Ovary (tissue), 10 donors: ENCODE measurements at regions of chr3 and their contacts with region 1.

Region 1: DNA sequence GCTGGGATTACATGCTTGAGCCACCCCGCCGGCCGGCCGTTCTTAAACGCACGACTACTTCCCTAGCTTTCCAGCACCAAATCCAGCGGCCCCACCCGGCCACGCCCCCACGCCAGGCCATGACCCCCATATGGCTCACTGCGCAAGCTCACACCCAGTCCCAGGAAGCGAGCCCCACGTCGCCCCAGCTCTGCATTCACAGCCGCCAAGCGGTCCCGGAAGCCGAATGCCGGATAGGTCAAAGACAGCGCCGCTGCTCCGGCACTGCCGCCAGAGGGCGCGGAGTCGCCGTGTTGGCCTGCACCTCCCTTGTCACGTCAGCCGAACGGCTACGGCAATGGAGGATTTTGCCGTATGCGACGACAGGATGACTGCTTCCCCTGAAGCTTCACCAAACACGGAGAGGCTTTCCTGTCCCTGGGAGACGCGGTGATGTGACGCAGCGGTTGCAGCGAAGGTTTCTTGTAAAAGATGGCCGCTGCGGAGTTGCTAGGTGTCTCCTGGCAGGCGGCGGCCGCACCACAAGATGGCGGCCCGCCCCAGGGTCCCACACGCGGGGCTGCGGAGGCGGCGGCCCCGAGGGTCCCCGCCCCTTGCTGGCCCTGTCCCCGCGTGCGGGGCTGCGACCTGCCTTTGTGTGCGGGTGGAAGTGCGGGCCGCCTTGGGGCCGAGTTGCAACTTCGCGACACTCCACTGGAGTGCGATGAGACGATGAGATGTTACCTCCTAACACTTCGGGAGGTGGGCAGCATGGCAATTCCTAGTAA is 30.2 kb upstream of the RPN1 start:
- DNase-seq: peak; percentile 99 to 100 (median 99)
- H3K4me3 ChIP-seq: peak overlapping the region; percentile 76
- H3K27ac ChIP-seq: peak overlapping the region; percentile 87 to 93
- H3K4me1 ChIP-seq: peaks cover 3% of the 10 kb centered on the region
- H3K27me3 ChIP-seq: no peaks in the 10 kb centered on the region
- CTCF ChIP-seq: peak; percentile 93 to 100 (median 100)
- EP300 ChIP-seq: peak; percentile 7
- POLR2A ChIP-seq: peak; percentile 92

Region 2: DNA sequence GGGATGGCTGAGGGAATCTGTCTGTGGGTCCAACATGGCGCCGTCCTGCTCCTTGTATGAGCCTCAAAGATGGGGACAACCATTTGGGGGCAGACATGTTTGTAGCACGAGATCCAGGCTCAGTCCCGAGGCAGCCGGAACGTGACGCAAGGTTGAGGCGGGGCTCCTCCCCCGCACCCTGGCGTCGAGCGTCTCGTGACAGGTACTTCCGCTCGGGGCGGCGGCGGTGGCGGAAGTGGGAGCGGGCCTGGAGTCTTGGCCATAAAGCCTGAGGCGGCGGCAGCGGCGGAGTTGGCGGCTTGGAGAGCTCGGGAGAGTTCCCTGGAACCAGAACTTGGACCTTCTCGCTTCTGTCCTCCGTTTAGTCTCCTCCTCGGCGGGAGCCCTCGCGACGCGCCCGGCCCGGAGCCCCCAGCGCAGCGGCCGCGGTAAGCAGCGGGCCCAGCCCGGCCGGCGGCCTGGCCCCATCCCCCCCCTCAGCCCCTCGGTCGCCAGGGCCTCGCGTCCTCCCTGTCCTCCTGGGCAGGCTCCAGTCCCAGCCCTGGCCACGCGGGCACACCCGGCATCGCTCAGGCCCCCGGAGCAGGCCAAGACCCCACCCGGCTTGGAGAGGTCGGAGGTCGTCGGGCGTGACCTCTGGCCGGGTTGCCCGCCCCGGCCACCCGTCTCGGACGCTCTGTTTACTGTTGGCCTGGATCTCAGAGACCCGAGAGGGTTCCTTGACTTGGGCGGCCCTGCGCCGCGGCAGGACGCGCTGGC is 45.3 kb after region 1 on chr3 and contains the start of gene RAB7A:
- intact Hi-C with region 1: loop called in 1 of 4 experiments (anchors 5 kb)
- DNase-seq: peak; percentile 97 to 99 (median 98)
- H3K4me3 ChIP-seq: peak within 1 kb of the TSS; percentile 85
- H3K27ac ChIP-seq: peak within 1 kb of the TSS; percentile 78 to 94
- H3K4me1 ChIP-seq: peaks cover 9% of the 10 kb centered on the region
- H3K27me3 ChIP-seq: no peaks in the 10 kb centered on the region
- CTCF ChIP-seq: peak in 1 of 3 donors; percentile 12
- EP300 ChIP-seq: peak; percentile 94
- POLR2A ChIP-seq: peak; percentile 91
- total RNA-seq, gene RAB7A: 70.1 to 253 (median 213) TPM

Region 3: GRCh38 chr3:128787256-128788240 is 106.8 kb after region 1 on chr3:
- intact Hi-C with region 1: loop called in 3 of 4 experiments (anchors 5 to 10 kb)
- DNase-seq: no peak
- H3K4me3 ChIP-seq: no peak overlapping the region
- H3K27ac ChIP-seq: no peak overlapping the region
- H3K4me1 ChIP-seq: peaks cover 21% of the 10 kb centered on the region
- H3K27me3 ChIP-seq: no peaks in the 10 kb centered on the region
- CTCF ChIP-seq: no peak
- EP300 ChIP-seq: no peak
- POLR2A ChIP-seq: no peak

Region 4: DNA sequence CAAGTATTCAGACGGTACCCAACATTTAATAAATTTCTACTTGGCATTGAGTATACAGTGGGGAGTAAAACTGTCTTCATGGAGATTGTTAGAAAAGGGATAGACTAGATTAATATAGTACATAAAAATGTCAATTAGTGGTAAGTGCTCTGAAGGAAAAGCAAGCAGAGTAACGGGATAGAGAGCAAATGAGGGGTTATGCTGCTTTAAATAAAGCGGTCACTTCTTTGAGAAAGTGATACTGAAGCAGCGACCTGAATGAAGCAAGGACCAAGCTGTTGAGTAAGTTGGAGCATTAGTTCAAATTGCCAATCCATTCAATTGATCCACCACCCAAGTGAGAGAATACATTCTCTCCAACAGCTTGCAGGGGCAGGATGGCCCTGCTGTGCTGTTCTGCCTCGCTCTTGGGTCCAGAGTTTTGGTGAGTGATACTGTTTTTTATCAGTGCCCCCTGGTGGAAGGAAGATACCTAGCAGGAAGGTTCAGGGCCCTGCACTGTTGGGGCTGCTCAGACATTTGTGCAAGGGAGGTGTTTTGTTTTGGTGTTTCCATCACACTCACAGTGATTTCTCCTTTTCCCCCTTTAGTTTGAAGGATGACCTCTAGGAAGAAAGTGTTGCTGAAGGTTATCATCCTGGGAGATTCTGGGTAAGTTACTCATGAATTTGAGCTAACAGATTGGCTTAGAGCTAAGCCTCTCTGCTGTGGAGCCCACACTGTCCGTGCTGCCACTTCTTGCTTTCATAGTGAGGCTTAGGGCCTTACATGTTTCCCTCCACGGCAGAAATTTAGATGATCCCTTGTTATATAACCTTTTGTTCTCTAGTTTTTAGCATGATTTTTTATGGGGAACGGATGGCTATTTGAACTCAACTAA is 114.2 kb after region 1 on chr3:
- intact Hi-C with region 1: loop called in 3 of 4 experiments (anchors 2 to 10 kb)
- DNase-seq: peak; percentile 34 to 61 (median 48)
- H3K4me3 ChIP-seq: no peak overlapping the region
- H3K27ac ChIP-seq: no peak overlapping the region
- H3K4me1 ChIP-seq: peaks cover 8% of the 10 kb centered on the region
- H3K27me3 ChIP-seq: no peaks in the 10 kb centered on the region
- CTCF ChIP-seq: peak; percentile 33 to 70 (median 67)
- EP300 ChIP-seq: no peak
- POLR2A ChIP-seq: no peak

Region 5: GRCh38 chr3:128879125-128879969 is 198.6 kb after region 1 on chr3 and contains the start of gene ACAD9:
- intact Hi-C with region 1: loop called in 1 of 4 experiments (anchors 10 kb)
- DNase-seq: peak; percentile 97 to 99 (median 98)
- H3K4me3 ChIP-seq: peak within 1 kb of the TSS; percentile 85
- H3K27ac ChIP-seq: peak within 1 kb of the TSS; percentile 89 to 93
- H3K4me1 ChIP-seq: peaks cover 15% of the 10 kb centered on the region
- H3K27me3 ChIP-seq: no peaks in the 10 kb centered on the region
- CTCF ChIP-seq: peak in 1 of 3 donors; percentile 40
- EP300 ChIP-seq: no peak
- POLR2A ChIP-seq: peak; percentile 97
- total RNA-seq, gene ACAD9: 32.7 to 51.7 (median 39.0) TPM